CD4-positive, alpha-beta memory T cell (primary cell): ENCODE measurements at regions of chr4 and their contacts with region 1.

Region 1: GRCh38 chr4:122309988-122310626 is 68.7 kb upstream of the ADAD1 start:
- DNase-seq: no peak
- H3K4me3 ChIP-seq: no peak overlapping the region
- H3K4me3 Mint-ChIP-seq: no peak overlapping the region
- H3K27ac ChIP-seq: no peak overlapping the region
- H3K27ac Mint-ChIP-seq: peak overlapping the region in 2 of 7 donors; percentile 23 to 75
- H3K4me1 ChIP-seq: no peaks in the 10 kb centered on the region
- H3K4me1 Mint-ChIP-seq: peaks cover 0 to 4% (median 2%) of the 10 kb centered on the region in 4 donors
- H3K27me3 ChIP-seq: no peaks in the 10 kb centered on the region
- H3K27me3 Mint-ChIP-seq: no peaks in the 10 kb centered on the region

Region 2: GRCh38 chr4:122038896-122039295 is 271.2 kb before region 1 on chr4:
- CTCF ChIA-PET with region 1: no interaction called
- POLR2A ChIA-PET with region 1: no interaction called
- intact Hi-C with region 1: no loop called
- DNase-seq: no peak
- H3K4me3 ChIP-seq: no peak overlapping the region
- H3K4me3 Mint-ChIP-seq: no peak overlapping the region
- H3K27ac ChIP-seq: no peak overlapping the region
- H3K27ac Mint-ChIP-seq: no peak overlapping the region
- H3K4me1 ChIP-seq: no peaks in the 10 kb centered on the region
- H3K4me1 Mint-ChIP-seq: no peaks in the 10 kb centered on the region
- H3K27me3 ChIP-seq: no peaks in the 10 kb centered on the region
- H3K27me3 Mint-ChIP-seq: peaks cover 0 to 8% of the 10 kb centered on the region in 2 donors

Region 3: DNA sequence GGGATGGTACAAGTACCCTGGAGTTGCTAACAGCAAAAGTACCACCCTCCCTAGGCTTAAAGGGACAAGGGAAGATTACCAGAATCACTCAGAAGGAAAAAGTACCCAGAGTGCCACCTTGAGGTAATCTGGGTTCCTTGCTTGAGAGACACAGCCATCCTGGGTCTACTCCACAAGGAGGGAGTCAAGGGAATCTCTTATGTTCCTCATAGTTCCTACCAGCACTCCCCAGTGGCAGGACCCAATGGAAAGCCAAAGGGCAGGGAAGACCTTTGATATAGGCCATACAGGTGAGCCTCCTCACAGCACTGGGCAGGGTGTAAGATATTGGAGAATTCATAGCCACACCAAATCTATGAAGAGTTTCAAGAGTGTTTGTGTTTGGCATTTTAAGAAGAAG is 140.7 kb after region 1 on chr4:
- CTCF ChIA-PET with region 1: no interaction called
- POLR2A ChIA-PET with region 1: no interaction called
- intact Hi-C with region 1: loop called (anchors 2 kb)
- DNase-seq: peak in 1 of 5 donors; percentile 11
- H3K4me3 ChIP-seq: no peak overlapping the region
- H3K4me3 Mint-ChIP-seq: no peak overlapping the region
- H3K27ac ChIP-seq: no peak overlapping the region
- H3K27ac Mint-ChIP-seq: peak overlapping the region in 1 of 7 donors; percentile 85
- H3K4me1 ChIP-seq: peaks cover 29% of the 10 kb centered on the region
- H3K4me1 Mint-ChIP-seq: peaks cover 23 to 32% (median 26%) of the 10 kb centered on the region in 4 donors
- H3K27me3 ChIP-seq: no peaks in the 10 kb centered on the region
- H3K27me3 Mint-ChIP-seq: no peaks in the 10 kb centered on the region

Region 4: DNA sequence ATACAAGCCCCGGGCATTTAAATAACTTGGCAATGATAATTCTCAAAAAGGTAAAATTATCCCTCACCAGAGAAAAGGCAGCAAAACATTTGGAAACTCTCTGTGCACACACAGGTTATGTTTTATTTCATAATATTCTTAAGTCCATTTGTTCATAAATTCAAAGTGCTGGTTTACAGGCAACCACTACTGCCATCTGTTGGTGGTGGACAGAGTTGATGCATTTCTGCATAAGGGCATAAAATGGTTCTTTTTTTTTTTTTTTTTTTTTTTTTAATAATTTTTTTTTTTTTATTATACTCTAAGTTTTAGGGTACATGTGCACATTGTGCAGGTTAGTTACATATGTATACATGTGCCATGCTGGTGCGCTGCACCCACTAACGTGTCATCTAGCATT is 342.3 kb after region 1 on chr4:
- CTCF ChIA-PET with region 1: no interaction called
- POLR2A ChIA-PET with region 1: no interaction called
- intact Hi-C with region 1: loop called (anchors 5 kb)
- DNase-seq: peak; percentile 40 to 52 (median 47)
- H3K4me3 ChIP-seq: no peak overlapping the region
- H3K4me3 Mint-ChIP-seq: no peak overlapping the region
- H3K27ac ChIP-seq: no peak overlapping the region
- H3K27ac Mint-ChIP-seq: no peak overlapping the region
- H3K4me1 ChIP-seq: no peaks in the 10 kb centered on the region
- H3K4me1 Mint-ChIP-seq: no peaks in the 10 kb centered on the region
- H3K27me3 ChIP-seq: no peaks in the 10 kb centered on the region
- H3K27me3 Mint-ChIP-seq: no peaks in the 10 kb centered on the region